ENCODE measurements at regions of chr2 and their contacts with region 1.

Region 1: GRCh38 chr2:189661148-189661956 is at the start of gene ASNSD1:
- DNase-seq: peak; percentile 97 to 100 (median 99)
- ATAC-seq: peak; percentile 89
- H3K4me3 ChIP-seq: peak within 1 kb of the TSS; percentile 79 to 88
- H3K4me3 Mint-ChIP-seq: no peak within 1 kb of the TSS
- H3K27ac ChIP-seq: peak within 1 kb of the TSS; percentile 87 to 91
- H3K27ac Mint-ChIP-seq: no peak within 1 kb of the TSS
- H3K4me1 ChIP-seq: peaks cover 47% of the 10 kb centered on the region
- H3K4me1 Mint-ChIP-seq: peaks cover 61% of the 10 kb centered on the region
- H3K27me3 ChIP-seq: no peaks in the 10 kb centered on the region
- H3K27me3 Mint-ChIP-seq: no peaks in the 10 kb centered on the region
- CTCF ChIP-seq: peak; percentile 92
- total RNA-seq, gene ASNSD1: 62.7 to 69.4 TPM

Region 2: DNA sequence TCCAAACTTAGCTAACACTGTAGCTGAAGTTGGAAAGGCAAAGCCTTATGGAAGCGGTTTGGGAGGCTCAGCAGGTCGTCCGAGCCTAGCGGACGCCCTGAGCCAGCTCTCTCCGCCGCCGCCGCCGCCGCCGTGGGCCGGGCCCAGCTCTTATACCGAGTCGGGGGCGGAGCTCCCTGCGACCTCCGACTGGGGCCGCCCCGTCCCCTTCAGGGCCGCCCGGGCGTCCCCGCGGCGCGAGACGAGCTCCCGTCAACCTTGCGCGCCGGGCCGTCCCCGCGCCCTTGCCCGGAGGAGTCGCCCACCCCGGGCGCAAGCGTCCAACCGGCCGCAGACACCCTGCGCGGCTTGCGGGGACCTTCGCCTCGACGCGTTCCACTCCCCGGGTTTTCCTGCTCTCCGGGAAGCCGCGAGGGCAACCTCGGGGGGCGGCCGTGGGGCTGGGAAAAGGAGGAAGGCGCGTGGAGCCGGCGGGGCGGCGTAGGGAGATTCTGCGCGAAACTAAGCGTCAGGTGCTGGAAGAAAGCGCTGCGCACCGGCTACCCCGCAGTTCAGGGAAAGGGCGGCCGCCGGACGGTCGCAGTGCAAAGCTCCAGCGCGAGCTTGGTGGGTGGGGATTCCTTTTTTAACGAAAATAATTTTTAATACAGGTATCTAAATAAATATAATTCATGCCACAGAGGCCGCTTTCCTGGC is 80.5 kb before region 1 on chr2 and contains the start of gene SLC40A1:
- CTCF ChIA-PET with region 1: interaction called, 6 read pairs
- POLR2A ChIA-PET with region 1: interaction called, 18 read pairs
- intact Hi-C with region 1: loop called in 1 of 2 experiments (anchors 1 kb)
- DNase-seq: peak in 8 of 9 experiments; percentile 36 to 78 (median 59)
- ATAC-seq: peak; percentile 95
- H3K4me3 ChIP-seq: peak within 1 kb of the TSS; percentile 55 to 63
- H3K4me3 Mint-ChIP-seq: peak within 1 kb of the TSS; percentile 91
- H3K27ac ChIP-seq: peak within 1 kb of the TSS; percentile 29
- H3K27ac Mint-ChIP-seq: peak within 1 kb of the TSS; percentile 81
- H3K4me1 ChIP-seq: peaks cover 17% of the 10 kb centered on the region
- H3K4me1 Mint-ChIP-seq: peaks cover 38% of the 10 kb centered on the region
- H3K27me3 ChIP-seq: peaks cover 0 to 2% of the 10 kb centered on the region in 2 experiments
- H3K27me3 Mint-ChIP-seq: peaks cover 17% of the 10 kb centered on the region
- CTCF ChIP-seq: no peak
- total RNA-seq, gene SLC40A1: 1.3 to 1.9 TPM

Region 3: GRCh38 chr2:189698020-189698887 is 36.9 kb after region 1 on chr2:
- CTCF ChIA-PET with region 1: interaction called, 92 read pairs
- POLR2A ChIA-PET with region 1: interaction called, 3 read pairs
- intact Hi-C with region 1: loop called (anchors 1 kb)
- DNase-seq: peak in 6 of 9 experiments; percentile 14 to 76 (median 46)
- ATAC-seq: peak; percentile 66
- H3K4me3 ChIP-seq: no peak overlapping the region
- H3K4me3 Mint-ChIP-seq: peak overlapping the region; percentile 53
- H3K27ac ChIP-seq: no peak overlapping the region
- H3K27ac Mint-ChIP-seq: peak overlapping the region; percentile 6
- H3K4me1 ChIP-seq: no peaks in the 10 kb centered on the region
- H3K4me1 Mint-ChIP-seq: peaks cover 5% of the 10 kb centered on the region
- H3K27me3 ChIP-seq: no peaks in the 10 kb centered on the region
- H3K27me3 Mint-ChIP-seq: no peaks in the 10 kb centered on the region
- CTCF ChIP-seq: peak; percentile 80

Region 4: DNA sequence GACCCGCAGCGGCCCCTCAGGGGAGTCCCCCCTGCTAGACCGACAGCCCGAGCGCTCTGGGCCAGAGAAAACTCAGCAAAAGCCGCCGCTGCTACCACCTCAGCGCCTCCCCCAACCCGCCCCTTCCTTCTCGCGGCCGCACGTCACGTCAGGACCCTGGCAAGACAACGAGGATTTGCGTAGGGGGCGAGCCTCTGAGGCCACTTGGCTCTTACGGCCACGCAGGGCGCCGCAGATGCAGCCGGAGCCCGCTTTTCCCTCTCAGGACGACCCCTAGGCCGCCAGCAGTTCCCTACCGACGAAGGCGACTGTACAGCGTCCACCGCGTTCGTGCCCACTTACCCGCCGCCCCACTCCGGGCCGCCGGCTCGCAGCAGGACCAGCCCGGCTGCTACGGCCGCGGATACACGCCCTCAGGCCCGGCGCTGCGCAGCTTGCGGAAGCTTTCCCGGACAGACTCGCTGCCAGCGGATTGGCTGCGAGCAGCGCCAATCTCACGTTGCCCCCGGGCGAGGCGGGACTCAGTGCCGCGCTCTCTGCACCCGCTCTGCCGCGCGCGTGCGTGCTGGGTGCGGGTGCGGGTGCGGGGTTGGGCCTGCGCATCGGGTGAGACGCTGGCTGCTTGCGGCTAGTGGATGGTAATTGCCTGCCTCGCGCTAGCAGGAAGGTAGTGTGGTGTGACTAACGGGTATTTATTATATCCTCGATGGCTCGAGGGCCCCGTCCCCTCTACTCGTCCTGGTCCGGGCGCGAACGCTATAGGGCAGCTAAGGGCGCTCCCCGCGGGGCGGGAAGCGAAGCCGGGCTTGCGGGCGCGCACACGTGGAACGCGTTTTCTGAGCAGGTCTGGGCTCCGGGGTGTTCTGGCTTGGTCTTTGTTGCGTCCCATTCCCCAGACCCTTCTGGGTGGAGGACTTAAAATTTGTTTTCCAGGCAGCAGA is 122.8 kb after region 1 on chr2 and contains the starts of genes ORMDL1 and PMS1:
- CTCF ChIA-PET with region 1: interaction called, 4 read pairs
- POLR2A ChIA-PET with region 1: interaction called, 5 read pairs
- intact Hi-C with region 1: loop called (anchors 1 to 5 kb)
- DNase-seq: peak; percentile 86 to 98 (median 95)
- ATAC-seq: peak; percentile 89
- H3K4me3 ChIP-seq: peak within 1 kb of the TSS; percentile 56 to 91
- H3K4me3 Mint-ChIP-seq: peak within 1 kb of the TSS; percentile 97
- H3K27ac ChIP-seq: peak within 1 kb of the TSS; percentile 96 to 97
- H3K27ac Mint-ChIP-seq: peak within 1 kb of the TSS; percentile 97
- H3K4me1 ChIP-seq: peaks cover 45% of the 10 kb centered on the region
- H3K4me1 Mint-ChIP-seq: peaks cover 65% of the 10 kb centered on the region
- H3K27me3 ChIP-seq: no peaks in the 10 kb centered on the region
- H3K27me3 Mint-ChIP-seq: no peaks in the 10 kb centered on the region
- CTCF ChIP-seq: no peak
- total RNA-seq, gene ORMDL1: 105 to 107 TPM
- total RNA-seq, gene PMS1: 12.2 to 15.1 TPM

Region 5: GRCh38 chr2:190319555-190320498 is 658.5 kb after region 1 on chr2 and contains the start of gene HIBCH:
- CTCF ChIA-PET with region 1: no interaction called
- POLR2A ChIA-PET with region 1: no interaction called
- intact Hi-C with region 1: loop called (anchors 2 to 5 kb)
- DNase-seq: peak; percentile 51 to 91 (median 83)
- ATAC-seq: peak; percentile 89
- H3K4me3 ChIP-seq: peak within 1 kb of the TSS; percentile 77 to 94
- H3K4me3 Mint-ChIP-seq: peak within 1 kb of the TSS; percentile 100
- H3K27ac ChIP-seq: peak within 1 kb of the TSS; percentile 66 to 88
- H3K27ac Mint-ChIP-seq: peak within 1 kb of the TSS; percentile 98
- H3K4me1 ChIP-seq: peaks cover 19% of the 10 kb centered on the region
- H3K4me1 Mint-ChIP-seq: peaks cover 50% of the 10 kb centered on the region
- H3K27me3 ChIP-seq: no peaks in the 10 kb centered on the region
- H3K27me3 Mint-ChIP-seq: no peaks in the 10 kb centered on the region
- CTCF ChIP-seq: peak; percentile 70
- total RNA-seq, gene HIBCH: 3.7 to 5.8 TPM

Measured in CD8-positive, alpha-beta T cell (primary cell).